Breast epithelium (tissue), 4 donors: ENCODE measurements at regions of chr7 and their contacts with region 1.

Region 1: DNA sequence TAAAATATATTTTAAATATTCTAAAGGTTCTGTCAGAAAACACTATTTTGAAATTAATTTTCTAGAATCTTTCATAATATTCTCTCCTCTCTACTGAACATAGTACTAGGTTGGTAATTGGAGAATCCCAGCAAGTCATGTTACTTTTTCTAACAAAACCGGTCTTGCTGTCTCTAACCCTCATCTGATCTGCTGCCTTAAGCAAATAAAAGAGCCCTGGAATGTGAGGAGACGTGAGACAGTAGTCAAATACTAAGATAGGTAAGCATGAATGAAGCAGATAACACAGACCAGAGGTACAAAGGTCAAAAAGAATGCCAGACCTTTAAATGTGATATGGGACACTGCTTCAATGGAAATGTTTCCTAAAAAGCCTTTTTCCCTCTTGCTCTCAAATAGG is 462.4 kb upstream of the NUPR2 start:
- DNase-seq: no peak
- H3K4me3 ChIP-seq: no peak overlapping the region
- H3K27ac ChIP-seq: no peak overlapping the region
- H3K4me1 ChIP-seq: no peaks in the 10 kb centered on the region
- H3K27me3 ChIP-seq: no peaks in the 10 kb centered on the region
- CTCF ChIP-seq: no peak
- POLR2A ChIP-seq: no peak

Region 2: DNA sequence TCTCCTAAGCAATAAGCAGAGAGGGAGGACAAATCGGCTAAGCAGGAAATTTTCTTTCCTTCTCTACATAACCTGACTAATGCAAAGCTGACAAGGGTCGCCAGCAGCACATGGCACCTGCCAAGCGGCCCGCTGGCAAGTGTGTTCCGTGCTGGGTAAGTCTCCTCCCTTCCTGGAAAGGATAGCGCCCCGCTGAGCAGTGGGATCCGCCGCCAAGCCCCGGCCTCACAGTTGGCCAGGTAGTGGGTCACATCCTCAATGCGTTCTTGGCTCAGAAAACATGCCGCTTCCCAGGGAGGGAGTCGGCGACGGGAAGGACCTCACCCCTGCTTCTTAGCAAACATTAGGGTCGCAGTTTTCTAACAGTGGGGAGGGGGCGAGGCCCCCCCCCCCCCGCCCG is 26.5 kb after region 1 on chr7:
- intact Hi-C with region 1: loop called (anchors 2 kb)
- DNase-seq: no peak
- H3K4me3 ChIP-seq: no peak overlapping the region
- H3K27ac ChIP-seq: no peak overlapping the region
- H3K4me1 ChIP-seq: no peaks in the 10 kb centered on the region
- H3K27me3 ChIP-seq: no peaks in the 10 kb centered on the region
- CTCF ChIP-seq: no peak
- POLR2A ChIP-seq: no peak

Region 3: DNA sequence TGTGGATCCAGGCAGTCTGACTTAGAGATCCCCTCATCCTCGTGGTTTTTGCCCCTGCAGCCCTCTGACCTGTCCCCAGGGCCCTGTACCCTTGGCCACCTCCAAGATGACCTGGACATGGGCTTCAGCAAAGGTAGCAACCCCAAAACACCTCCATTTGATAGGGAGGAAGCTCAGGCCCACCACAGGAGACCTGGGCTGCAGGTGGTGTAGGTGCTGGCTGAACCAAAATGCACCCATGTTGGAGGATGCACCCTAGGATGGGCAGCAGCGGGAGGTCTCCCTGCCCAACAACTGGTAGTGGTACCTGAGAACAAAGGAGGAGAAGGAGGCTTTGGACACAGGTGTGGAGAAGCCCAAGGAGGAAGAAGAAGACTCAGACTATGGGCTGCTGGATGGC is 1060.0 kb after region 1 on chr7:
- intact Hi-C with region 1: no loop called
- DNase-seq: peak in 1 of 2 donors; percentile 5
- H3K4me3 ChIP-seq: no peak overlapping the region
- H3K27ac ChIP-seq: no peak overlapping the region
- H3K4me1 ChIP-seq: no peaks in the 10 kb centered on the region
- H3K27me3 ChIP-seq: no peaks in the 10 kb centered on the region
- CTCF ChIP-seq: no peak
- POLR2A ChIP-seq: no peak